Heart left ventricle (tissue), 16 donors: ENCODE measurements at regions of chr21 and their contacts with region 1.

Region 1: DNA sequence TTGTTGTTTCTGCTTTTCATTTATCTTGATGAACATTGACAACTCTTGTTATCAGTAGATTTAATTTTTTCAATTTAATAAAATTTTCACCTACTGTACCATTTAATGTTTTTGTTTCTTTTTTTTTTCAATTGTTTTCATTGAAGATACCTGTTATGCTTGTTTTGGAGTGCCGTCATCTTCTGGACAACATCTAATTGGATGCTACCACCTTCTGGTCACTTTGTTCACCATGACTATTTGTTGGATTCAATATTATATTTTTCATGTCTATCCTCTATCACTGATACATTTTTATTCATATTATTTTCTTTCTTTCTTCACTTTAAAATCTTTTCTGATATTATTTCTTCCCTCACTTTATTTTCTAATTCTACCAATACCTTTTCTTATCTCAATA is 14.0 kb downstream of the KRTAP21-2 start:
- DNase-seq: no peak
- ATAC-seq: no peak
- H3K4me3 ChIP-seq: no peak overlapping the region
- H3K27ac ChIP-seq: no peak overlapping the region
- H3K4me1 ChIP-seq: no peaks in the 10 kb centered on the region
- H3K27me3 ChIP-seq: no peaks in the 10 kb centered on the region
- CTCF ChIP-seq: peak in 7 of 12 donors; percentile 19 to 40 (median 27)
- POLR2A ChIP-seq: no peak

Region 2: DNA sequence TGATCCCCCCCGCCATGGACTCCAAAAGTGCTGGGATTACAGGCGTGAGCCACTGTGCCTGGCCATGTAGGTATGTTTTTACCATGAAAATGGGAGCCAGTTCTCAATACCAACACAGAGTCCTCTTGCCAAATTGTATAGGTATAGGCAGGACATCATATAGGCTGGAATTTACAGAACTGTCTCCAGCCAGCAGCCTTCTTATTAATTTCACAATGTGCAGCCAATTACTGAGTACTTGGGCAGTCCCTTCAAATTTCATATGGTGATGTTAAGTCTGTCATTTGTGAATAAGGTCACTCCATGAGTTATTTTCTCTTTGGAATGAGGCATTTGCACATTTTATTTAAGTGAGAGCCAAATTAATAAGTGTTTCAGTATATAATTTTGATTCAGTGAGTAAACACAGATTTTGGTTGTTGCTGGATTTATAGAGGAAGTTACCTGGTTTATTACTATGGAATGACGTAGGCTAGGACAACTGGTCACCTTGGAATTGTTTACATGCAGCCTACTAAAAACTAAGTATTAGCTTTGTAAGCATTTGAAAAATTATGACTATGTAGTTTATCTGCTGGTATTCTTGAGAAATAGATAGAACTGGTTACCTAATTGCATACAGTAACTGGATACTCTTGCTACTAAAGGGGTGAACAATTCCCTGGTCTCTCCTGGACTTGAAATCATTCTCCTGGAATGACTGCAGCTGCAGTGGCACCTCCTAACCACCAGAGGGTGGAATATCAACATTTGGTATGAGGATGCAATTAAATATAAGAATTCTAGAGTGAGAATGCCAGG is 392.4 kb before region 1 on chr21:
- intact Hi-C with region 1: loop called in 5 of 10 experiments (anchors 2 to 10 kb)
- DNase-seq: peak in 2 of 5 donors; percentile 23 to 25
- ATAC-seq: no peak
- H3K4me3 ChIP-seq: no peak overlapping the region
- H3K27ac ChIP-seq: no peak overlapping the region
- H3K4me1 ChIP-seq: no peaks in the 10 kb centered on the region
- H3K27me3 ChIP-seq: no peaks in the 10 kb centered on the region
- CTCF ChIP-seq: peak; percentile 70 to 86 (median 81)
- POLR2A ChIP-seq: no peak

Region 3: GRCh38 chr21:30444204-30444603 is 288.8 kb before region 1 on chr21:
- intact Hi-C with region 1: loop called in 9 of 10 experiments (anchors 2 to 10 kb)
- DNase-seq: peak in 1 of 5 donors; percentile 30
- ATAC-seq: peak; percentile 64 to 89 (median 82)
- H3K4me3 ChIP-seq: no peak overlapping the region
- H3K27ac ChIP-seq: no peak overlapping the region
- H3K4me1 ChIP-seq: no peaks in the 10 kb centered on the region
- H3K27me3 ChIP-seq: no peaks in the 10 kb centered on the region
- CTCF ChIP-seq: peak in 10 of 12 donors; percentile 5 to 53 (median 37)
- POLR2A ChIP-seq: no peak